Esophagus muscularis mucosa (tissue), 4 donors: ENCODE measurements at regions of chr3 and their contacts with region 1.

Region 1: DNA sequence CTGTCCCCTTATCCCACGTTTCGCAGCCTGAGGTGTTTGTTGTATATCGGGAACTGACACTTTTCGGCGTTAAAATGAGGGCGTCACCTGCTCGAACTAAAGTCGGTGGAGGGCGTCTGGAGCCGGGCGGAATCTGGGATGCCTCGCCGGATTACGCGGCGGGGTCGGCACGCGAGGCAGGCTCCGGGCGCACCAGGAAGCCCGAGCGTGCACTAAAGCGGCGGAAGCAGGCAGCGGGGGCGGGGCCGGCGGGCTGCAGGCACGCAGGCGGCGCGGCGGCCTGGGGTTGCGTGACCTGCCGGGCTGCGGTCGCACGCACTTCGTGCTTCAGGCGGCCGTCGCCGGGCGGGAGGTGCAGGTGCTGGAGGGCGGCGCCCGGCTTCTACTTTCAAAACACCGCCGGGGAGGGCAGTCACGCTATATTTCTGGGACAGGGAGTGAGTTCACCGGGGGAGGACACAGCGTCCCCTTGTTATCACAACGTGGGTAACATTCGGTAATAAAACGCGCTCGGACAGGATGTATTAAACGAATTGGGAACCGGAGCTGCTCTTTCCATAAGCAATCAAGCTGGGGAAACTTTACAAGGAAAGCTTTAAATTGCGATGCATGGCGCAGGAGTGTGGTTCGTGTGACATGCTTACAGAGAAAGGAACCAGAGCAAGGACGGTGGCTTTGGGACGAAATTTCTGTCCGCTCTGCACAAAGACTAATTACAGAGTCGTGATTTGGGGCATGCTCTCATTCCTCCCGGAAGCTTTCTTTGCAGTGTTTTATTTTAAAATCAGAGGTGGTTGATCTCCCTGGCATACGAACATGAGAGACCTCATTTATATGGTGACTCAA is 9.1 kb upstream of the LEKR1 start:
- DNase-seq: no peak
- H3K4me3 ChIP-seq: peak overlapping the region; percentile 59 to 73 (median 72)
- H3K27ac ChIP-seq: peak overlapping the region; percentile 79 to 85 (median 80)
- H3K4me1 ChIP-seq: peaks cover 6 to 20% (median 18%) of the 10 kb centered on the region in 4 donors
- H3K27me3 ChIP-seq: no peaks in the 10 kb centered on the region
- CTCF ChIP-seq: peak in 1 of 3 experiments; percentile 22
- EP300 ChIP-seq: peak; percentile 88
- POLR2A ChIP-seq: no peak

Region 2: GRCh38 chr3:156685198-156685597 is 131.8 kb before region 1 on chr3:
- intact Hi-C with region 1: loop called (anchors 5 kb)
- DNase-seq: no peak
- H3K4me3 ChIP-seq: no peak overlapping the region
- H3K27ac ChIP-seq: peak overlapping the region in 1 of 4 donors; percentile 47
- H3K4me1 ChIP-seq: peaks cover 75 to 100% (median 100%) of the 10 kb centered on the region in 4 donors
- H3K27me3 ChIP-seq: no peaks in the 10 kb centered on the region
- CTCF ChIP-seq: no peak
- EP300 ChIP-seq: no peak
- POLR2A ChIP-seq: no peak

Region 3: DNA sequence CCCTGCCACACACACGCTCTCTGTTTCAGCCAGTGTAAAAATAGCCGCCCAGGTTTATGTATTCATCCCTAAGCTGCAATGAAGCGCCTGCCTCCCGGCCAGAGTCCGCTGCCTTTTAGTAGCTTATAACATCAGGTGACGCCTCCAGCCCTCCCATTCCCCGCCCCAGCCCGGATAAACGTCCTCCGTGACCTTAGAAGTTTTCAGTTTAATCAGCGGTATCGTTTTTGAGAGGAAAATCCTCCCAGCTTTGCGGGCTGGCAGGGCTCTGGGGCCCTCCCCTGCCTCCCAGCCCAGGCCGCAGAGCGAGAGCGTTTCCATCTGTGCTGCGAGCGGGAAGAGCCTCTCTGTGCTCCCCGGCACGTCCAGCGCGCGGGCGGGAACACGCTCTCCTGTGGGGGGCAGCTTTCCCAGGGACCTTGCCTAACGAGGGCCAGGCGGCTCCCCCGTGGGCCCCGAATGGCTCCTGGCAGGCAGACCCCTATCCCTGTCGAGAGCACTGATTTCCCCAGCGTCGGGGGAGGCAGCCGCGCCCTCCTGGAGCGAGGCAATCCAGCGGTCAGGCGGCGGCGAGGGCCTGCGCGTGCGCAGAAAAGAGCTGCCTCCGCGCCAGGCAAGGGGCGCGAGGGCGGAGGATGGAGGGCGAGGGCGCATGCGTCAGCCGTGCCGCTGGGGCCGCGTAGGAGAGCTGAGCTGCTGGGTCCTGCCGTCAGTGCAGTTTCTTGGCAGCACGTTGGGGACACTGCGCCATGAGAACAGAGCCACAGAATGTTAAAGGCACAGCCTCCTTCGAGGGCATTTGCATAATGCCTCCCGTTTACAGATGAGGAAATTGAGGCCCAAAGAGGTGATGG is 271.8 kb after region 1 on chr3:
- intact Hi-C with region 1: loop called (anchors 5 kb)
- DNase-seq: peak; percentile 98
- H3K4me3 ChIP-seq: peak overlapping the region; percentile 65 to 81 (median 72)
- H3K27ac ChIP-seq: peak overlapping the region; percentile 98 to 99 (median 98)
- H3K4me1 ChIP-seq: peaks cover 41 to 63% (median 53%) of the 10 kb centered on the region in 4 donors
- H3K27me3 ChIP-seq: no peaks in the 10 kb centered on the region
- CTCF ChIP-seq: no peak
- EP300 ChIP-seq: peak; percentile 87
- POLR2A ChIP-seq: peak; percentile 89